ENCODE measurements at regions of chr2 and their contacts with region 1.

Region 1: DNA sequence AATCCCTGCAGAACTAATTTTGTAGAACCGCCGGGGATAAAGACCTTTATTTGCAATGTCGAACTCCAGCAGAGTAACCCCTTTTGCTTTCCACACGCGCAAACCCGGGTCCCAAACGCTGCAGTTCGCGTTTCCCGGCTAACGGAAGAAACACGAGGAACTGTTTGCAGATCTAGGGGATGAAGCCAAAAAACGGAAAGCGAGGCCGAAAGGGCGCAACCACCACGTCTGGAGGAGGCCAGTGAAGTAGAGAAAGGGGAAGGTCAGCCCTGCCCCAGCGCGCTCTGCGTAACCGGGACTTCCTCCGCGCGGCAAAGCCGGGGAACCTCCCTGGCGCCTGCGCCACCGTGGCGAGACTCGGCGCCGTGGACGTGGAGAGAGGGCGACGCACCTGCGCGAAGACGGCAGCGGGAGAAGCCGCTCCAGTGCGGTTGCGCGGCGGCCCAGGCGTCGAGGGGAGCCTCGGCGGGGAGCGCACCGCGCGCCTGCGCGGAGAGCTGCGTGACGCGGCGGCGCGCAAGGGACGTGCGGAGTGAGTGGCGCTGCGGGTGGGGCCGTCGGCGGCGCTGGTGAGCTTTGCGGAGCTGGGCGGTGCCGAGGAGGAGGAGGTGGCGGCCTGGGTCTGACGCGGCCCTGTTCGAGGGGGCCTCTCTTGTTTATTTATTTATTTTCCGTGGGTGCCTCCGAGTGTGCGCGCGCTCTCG is at the start of gene PPP1CB:
- DNase-seq: peak; percentile 95 to 97 (median 95)
- ATAC-seq: peak; percentile 90
- H3K4me3 ChIP-seq: peak within 1 kb of the TSS; percentile 90
- H3K27ac ChIP-seq: peak within 1 kb of the TSS; percentile 93
- H3K4me1 ChIP-seq: peaks cover 3 to 27% of the 10 kb centered on the region in 2 experiments
- H3K27me3 ChIP-seq: no peaks in the 10 kb centered on the region
- CTCF ChIP-seq: peak; percentile 21 to 53 (median 47); a peak in 3 of 6 replicates
- EP300 ChIP-seq: no peak
- POLR2A ChIP-seq: peak; percentile 89
- RAD21 ChIP-seq: no peak
- polyA plus RNA-seq, gene PPP1CB: 55.7 to 112 TPM

Region 2: GRCh38 chr2:28566521-28567041 is 184.8 kb before region 1 on chr2:
- CTCF ChIA-PET with region 1: interaction called, 48 read pairs
- POLR2A ChIA-PET with region 1: interaction called, 5 read pairs
- in situ Hi-C with region 1: no loop called
- intact Hi-C with region 1: loop called (anchors 1 kb)
- DNase-seq: peak; percentile 87 to 97 (median 96)
- ATAC-seq: peak; percentile 99
- H3K4me3 ChIP-seq: peak overlapping the region; percentile 42
- H3K27ac ChIP-seq: no peak overlapping the region
- H3K4me1 ChIP-seq: peaks cover 0 to 7% of the 10 kb centered on the region in 2 experiments; a peak in 3 of 5 replicates
- H3K27me3 ChIP-seq: peaks cover 5 to 14% of the 10 kb centered on the region in 2 experiments; a peak in 4 of 5 replicates
- CTCF ChIP-seq: peak; percentile 93 to 100 (median 100)
- EP300 ChIP-seq: no peak
- POLR2A ChIP-seq: no peak
- RAD21 ChIP-seq: peak; percentile 95 to 96

Region 3: DNA sequence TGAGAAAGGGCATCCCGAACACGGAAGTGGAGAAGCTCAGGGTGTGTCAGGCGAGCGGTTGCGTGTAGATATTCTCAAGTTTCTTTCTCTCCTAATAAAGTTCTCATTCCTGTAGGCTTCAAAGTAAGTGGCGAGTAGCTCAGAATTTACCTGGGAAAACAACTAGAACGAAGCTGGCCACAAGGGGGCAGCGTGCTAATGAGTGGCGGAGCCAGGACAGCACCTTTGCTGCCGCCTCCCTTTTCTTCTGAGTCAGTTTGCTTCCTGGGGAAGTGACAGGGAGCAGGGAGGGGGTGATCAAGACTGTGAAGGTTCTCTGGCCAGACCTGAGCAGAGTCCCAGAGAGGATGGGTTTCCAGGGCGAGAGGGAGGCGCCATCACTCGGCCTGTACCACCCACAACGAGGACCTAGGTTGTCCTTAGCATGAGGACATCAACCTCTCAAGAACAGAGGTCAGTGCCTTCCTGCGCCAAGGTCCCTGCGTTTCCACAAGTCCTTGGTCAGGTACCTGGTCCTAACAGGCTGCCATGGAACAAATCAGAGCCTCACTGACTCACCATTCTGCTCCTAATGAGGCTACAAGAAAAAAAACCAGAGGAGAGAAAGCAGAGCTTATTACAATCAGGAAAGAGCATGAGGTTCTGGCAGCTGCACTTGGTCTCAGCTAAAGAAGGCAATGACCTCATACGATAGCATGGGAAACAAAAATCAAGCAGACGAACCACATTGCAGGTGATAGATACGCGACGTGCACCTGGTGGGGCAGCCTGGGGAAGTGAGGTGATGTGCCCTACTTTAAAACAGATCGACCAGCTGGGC is 156.9 kb before region 1 on chr2:
- CTCF ChIA-PET with region 1: interaction called, 18 read pairs
- POLR2A ChIA-PET with region 1: interaction called, 3 read pairs
- in situ Hi-C with region 1: loop called (anchors 25 kb)
- intact Hi-C with region 1: loop called (anchors 1 kb)
- DNase-seq: peak; percentile 82 to 91 (median 84)
- ATAC-seq: peak; percentile 94
- H3K4me3 ChIP-seq: no peak overlapping the region
- H3K27ac ChIP-seq: no peak overlapping the region
- H3K4me1 ChIP-seq: peaks cover 5 to 8% of the 10 kb centered on the region in 2 experiments; a peak in 2 of 5 replicates
- H3K27me3 ChIP-seq: peaks cover 0 to 28% of the 10 kb centered on the region in 2 experiments; a peak in 3 of 5 replicates
- CTCF ChIP-seq: peak; percentile 90 to 95 (median 91)
- EP300 ChIP-seq: no peak
- POLR2A ChIP-seq: no peak
- RAD21 ChIP-seq: peak; percentile 77 to 91

Region 4: GRCh38 chr2:28621172-28622100 is 130.0 kb before region 1 on chr2:
- CTCF ChIA-PET with region 1: interaction called, 7 read pairs
- POLR2A ChIA-PET with region 1: no interaction called
- in situ Hi-C with region 1: no loop called
- intact Hi-C with region 1: loop called (anchors 1 kb)
- DNase-seq: peak; percentile 47 to 70 (median 60)
- ATAC-seq: peak; percentile 98
- H3K4me3 ChIP-seq: no peak overlapping the region
- H3K27ac ChIP-seq: no peak overlapping the region
- H3K4me1 ChIP-seq: peaks cover 10 to 14% of the 10 kb centered on the region in 2 experiments
- H3K27me3 ChIP-seq: peaks cover 5 to 23% of the 10 kb centered on the region in 2 experiments; a peak in 3 of 5 replicates
- CTCF ChIP-seq: peak; percentile 78 to 97 (median 90)
- EP300 ChIP-seq: no peak
- POLR2A ChIP-seq: no peak
- RAD21 ChIP-seq: peak; percentile 91 to 92

Region 5: GRCh38 chr2:28681158-28681571 is 70.2 kb before region 1 on chr2:
- CTCF ChIA-PET with region 1: no interaction called
- POLR2A ChIA-PET with region 1: interaction called, 3 read pairs
- in situ Hi-C with region 1: no loop called
- intact Hi-C with region 1: loop called (anchors 5 kb)
- DNase-seq: no peak
- ATAC-seq: no peak
- H3K4me3 ChIP-seq: no peak overlapping the region
- H3K27ac ChIP-seq: no peak overlapping the region
- H3K4me1 ChIP-seq: peaks cover 23 to 31% of the 10 kb centered on the region in 2 experiments
- H3K27me3 ChIP-seq: no peaks in the 10 kb centered on the region
- CTCF ChIP-seq: no peak
- EP300 ChIP-seq: no peak
- POLR2A ChIP-seq: no peak
- RAD21 ChIP-seq: no peak

Region 6: GRCh38 chr2:28721601-28722191 is 29.7 kb before region 1 on chr2:
- CTCF ChIA-PET with region 1: no interaction called
- POLR2A ChIA-PET with region 1: no interaction called
- in situ Hi-C with region 1: no loop called
- intact Hi-C with region 1: no loop called
- DNase-seq: no peak
- ATAC-seq: no peak
- H3K4me3 ChIP-seq: no peak overlapping the region
- H3K27ac ChIP-seq: no peak overlapping the region
- H3K4me1 ChIP-seq: no peaks in the 10 kb centered on the region; a peak in 2 of 5 replicates
- H3K27me3 ChIP-seq: peaks cover 0 to 2% of the 10 kb centered on the region in 2 experiments; a peak in 1 of 5 replicates
- CTCF ChIP-seq: no peak
- EP300 ChIP-seq: no peak
- POLR2A ChIP-seq: no peak
- RAD21 ChIP-seq: no peak

Region 7: DNA sequence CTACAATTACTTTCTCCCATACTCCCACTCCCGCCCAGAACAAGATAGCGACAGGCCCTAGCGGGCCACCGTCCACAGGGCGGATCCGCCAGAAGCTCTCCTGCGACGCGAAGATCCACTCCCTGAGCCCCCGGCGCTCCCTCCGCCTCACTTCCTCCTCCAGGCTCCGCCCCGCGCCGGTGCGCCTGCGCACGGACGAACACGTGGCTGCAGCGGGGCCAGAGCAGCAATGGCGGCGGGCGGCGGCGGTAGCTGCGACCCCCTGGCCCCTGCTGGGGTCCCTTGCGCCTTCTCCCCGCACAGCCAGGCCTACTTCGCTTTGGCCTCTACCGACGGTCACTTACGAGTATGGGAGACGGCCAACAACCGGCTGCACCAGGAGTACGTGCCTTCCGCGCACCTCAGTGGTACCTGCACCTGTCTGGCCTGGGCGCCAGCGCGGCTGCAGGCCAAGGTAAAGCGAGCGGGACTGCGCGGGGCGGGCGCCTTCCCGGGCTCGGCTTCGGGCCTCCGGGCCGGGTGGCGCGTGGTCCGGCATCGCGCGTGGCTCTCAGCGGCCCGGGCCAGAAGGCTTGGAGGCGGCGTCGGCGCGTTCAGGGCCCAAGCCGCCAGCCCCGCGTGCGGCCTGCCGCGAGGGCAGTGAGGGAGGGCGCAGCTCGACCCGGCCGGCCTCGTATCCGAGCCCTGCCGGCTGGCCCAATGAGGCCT is 143.2 kb after region 1 on chr2 and contains the start of gene WDR43:
- CTCF ChIA-PET with region 1: no interaction called
- POLR2A ChIA-PET with region 1: interaction called, 10 read pairs
- in situ Hi-C with region 1: no loop called
- intact Hi-C with region 1: no loop called
- DNase-seq: peak; percentile 94 to 98 (median 96)
- ATAC-seq: peak; percentile 92
- H3K4me3 ChIP-seq: peak within 1 kb of the TSS; percentile 94
- H3K27ac ChIP-seq: peak within 1 kb of the TSS; percentile 97
- H3K4me1 ChIP-seq: peaks cover 10 to 21% of the 10 kb centered on the region in 2 experiments; a peak in 4 of 5 replicates
- H3K27me3 ChIP-seq: no peaks in the 10 kb centered on the region
- CTCF ChIP-seq: no peak
- EP300 ChIP-seq: peak; percentile 54; the same call in 1 of the 2 replicates
- POLR2A ChIP-seq: peak; percentile 95
- RAD21 ChIP-seq: no peak
- polyA plus RNA-seq, gene WDR43: 34.6 to 39.2 TPM

Measured in K562 (cell line).